Calu3 (cell line): ENCODE measurements at regions of chr5 and their contacts with region 1.

Region 1: GRCh38 chr5:103808464-103809106 is 246.0 kb upstream of the NUDT12 start:
- DNase-seq: peak; percentile 65
- H3K4me3 Mint-ChIP-seq: no peak overlapping the region
- H3K27ac Mint-ChIP-seq: no peak overlapping the region
- H3K4me1 Mint-ChIP-seq: no peaks in the 10 kb centered on the region
- H3K27me3 Mint-ChIP-seq: no peaks in the 10 kb centered on the region
- CTCF ChIP-seq: peak; percentile 94

Region 2: DNA sequence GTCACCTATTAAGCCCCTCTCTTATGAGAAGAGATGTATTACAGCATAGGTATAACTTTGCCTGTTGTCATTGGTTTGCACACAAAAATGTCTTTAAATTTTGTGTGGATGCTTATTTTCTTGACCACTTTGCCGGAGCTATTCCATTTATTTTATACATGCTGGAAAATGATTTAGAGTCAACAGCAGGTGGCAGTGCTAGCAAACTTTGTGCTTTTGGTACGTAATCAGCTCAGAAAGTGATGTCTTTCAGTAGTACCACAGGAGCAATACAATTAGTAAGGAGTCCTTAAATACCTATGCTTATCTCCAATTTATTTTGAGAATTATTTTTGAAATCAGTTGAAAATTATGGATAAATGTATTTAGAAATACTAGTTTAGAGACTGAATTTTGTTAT is 226.2 kb before region 1 on chr5:
- CTCF ChIA-PET with region 1: interaction called, 12 read pairs
- intact Hi-C with region 1: loop called (anchors 1 kb)
- DNase-seq: peak; percentile 57
- H3K4me3 Mint-ChIP-seq: no peak overlapping the region
- H3K27ac Mint-ChIP-seq: no peak overlapping the region
- H3K4me1 Mint-ChIP-seq: peaks cover 6% of the 10 kb centered on the region
- H3K27me3 Mint-ChIP-seq: no peaks in the 10 kb centered on the region
- CTCF ChIP-seq: peak; percentile 62

Region 3: GRCh38 chr5:103840600-103840999 is 32.0 kb after region 1 on chr5:
- CTCF ChIA-PET with region 1: no interaction called
- intact Hi-C with region 1: no loop called
- DNase-seq: no peak
- H3K4me3 Mint-ChIP-seq: no peak overlapping the region
- H3K27ac Mint-ChIP-seq: no peak overlapping the region
- H3K4me1 Mint-ChIP-seq: no peaks in the 10 kb centered on the region
- H3K27me3 Mint-ChIP-seq: no peaks in the 10 kb centered on the region
- CTCF ChIP-seq: no peak

Region 4: DNA sequence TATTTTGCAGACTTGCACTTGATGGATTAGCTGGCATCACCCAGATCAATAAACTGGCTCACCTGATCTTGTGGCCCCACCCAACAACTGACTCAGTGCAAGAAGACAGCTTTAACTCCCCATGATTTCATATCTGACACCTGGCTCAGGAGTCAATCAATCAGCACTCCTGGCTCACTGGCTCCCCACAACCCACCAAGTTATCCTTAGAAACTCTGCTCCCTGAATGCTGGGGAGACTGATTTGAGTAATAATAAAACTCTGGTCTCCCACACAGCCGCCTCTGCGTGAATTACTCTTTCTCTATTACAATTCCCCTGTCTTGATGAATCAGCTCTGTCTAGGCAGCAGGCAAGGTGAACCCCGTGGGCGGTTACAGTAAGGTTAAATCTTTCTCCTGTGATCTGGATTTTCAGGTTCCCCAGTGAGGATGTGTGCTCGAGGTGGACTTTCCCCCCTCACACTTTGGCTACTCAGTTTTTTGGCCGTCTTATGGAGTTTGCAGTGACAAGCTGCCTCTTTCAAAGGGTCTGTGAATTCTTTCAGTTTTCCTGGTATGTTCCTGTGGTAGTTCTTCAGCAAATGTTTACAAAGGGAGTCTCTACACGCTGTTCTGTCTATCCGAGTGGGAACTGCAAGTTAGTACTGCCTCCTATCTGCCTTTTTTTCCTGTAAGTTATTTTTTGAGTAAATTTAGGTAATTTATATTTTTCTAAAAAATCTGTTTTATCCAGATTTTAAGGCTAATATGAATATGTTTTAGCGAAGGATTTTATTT is 254.2 kb after region 1 on chr5:
- CTCF ChIA-PET with region 1: no interaction called
- intact Hi-C with region 1: loop called (anchors 2 kb)
- DNase-seq: peak; percentile 63
- H3K4me3 Mint-ChIP-seq: peak overlapping the region; percentile 62
- H3K27ac Mint-ChIP-seq: peak overlapping the region; percentile 75
- H3K4me1 Mint-ChIP-seq: peaks cover 13% of the 10 kb centered on the region
- H3K27me3 Mint-ChIP-seq: no peaks in the 10 kb centered on the region
- CTCF ChIP-seq: no peak

Region 5: GRCh38 chr5:104178829-104179456 is 370.4 kb after region 1 on chr5:
- CTCF ChIA-PET with region 1: interaction called, 32 read pairs
- intact Hi-C with region 1: loop called (anchors 1 kb)
- DNase-seq: peak; percentile 70
- H3K4me3 Mint-ChIP-seq: no peak overlapping the region
- H3K27ac Mint-ChIP-seq: no peak overlapping the region
- H3K4me1 Mint-ChIP-seq: no peaks in the 10 kb centered on the region
- H3K27me3 Mint-ChIP-seq: no peaks in the 10 kb centered on the region
- CTCF ChIP-seq: peak; percentile 81

Region 6: DNA sequence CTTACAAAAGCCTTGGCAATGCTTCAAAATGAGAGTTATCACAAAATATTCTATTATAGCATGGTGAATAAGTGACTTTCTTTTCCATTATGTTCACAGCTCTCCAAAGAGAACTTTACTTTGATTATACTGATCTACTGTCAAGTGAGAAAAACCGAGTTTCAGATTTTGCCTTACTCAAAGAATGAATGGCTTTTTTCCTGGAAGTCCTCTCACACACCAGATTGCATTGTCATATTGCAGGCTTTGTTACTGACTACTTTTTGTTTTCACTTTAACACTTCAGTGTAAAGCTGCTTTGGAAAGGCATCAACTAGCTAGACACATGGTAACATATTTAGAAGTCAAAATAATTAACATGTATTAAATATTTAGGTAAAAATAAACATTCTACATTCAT is 519.2 kb after region 1 on chr5:
- CTCF ChIA-PET with region 1: no interaction called
- intact Hi-C with region 1: loop called (anchors 10 kb)
- DNase-seq: no peak
- H3K4me3 Mint-ChIP-seq: no peak overlapping the region
- H3K27ac Mint-ChIP-seq: no peak overlapping the region
- H3K4me1 Mint-ChIP-seq: no peaks in the 10 kb centered on the region
- H3K27me3 Mint-ChIP-seq: no peaks in the 10 kb centered on the region
- CTCF ChIP-seq: no peak

Region 7: GRCh38 chr5:104412649-104413246 is 604.2 kb after region 1 on chr5:
- CTCF ChIA-PET with region 1: interaction called, 9 read pairs
- intact Hi-C with region 1: loop called (anchors 2 kb)
- DNase-seq: peak; percentile 38
- H3K4me3 Mint-ChIP-seq: no peak overlapping the region
- H3K27ac Mint-ChIP-seq: no peak overlapping the region
- H3K4me1 Mint-ChIP-seq: no peaks in the 10 kb centered on the region
- H3K27me3 Mint-ChIP-seq: no peaks in the 10 kb centered on the region
- CTCF ChIP-seq: peak; percentile 72

Region 8: GRCh38 chr5:104800436-104801048 is 992.0 kb after region 1 on chr5:
- CTCF ChIA-PET with region 1: no interaction called
- intact Hi-C with region 1: loop called (anchors 10 kb)
- DNase-seq: peak; percentile 48
- H3K4me3 Mint-ChIP-seq: no peak overlapping the region
- H3K27ac Mint-ChIP-seq: no peak overlapping the region
- H3K4me1 Mint-ChIP-seq: no peaks in the 10 kb centered on the region
- H3K27me3 Mint-ChIP-seq: no peaks in the 10 kb centered on the region
- CTCF ChIP-seq: peak; percentile 81